A549 (cell line): ENCODE measurements at regions of chr1 and their contacts with region 1.

Region 1: DNA sequence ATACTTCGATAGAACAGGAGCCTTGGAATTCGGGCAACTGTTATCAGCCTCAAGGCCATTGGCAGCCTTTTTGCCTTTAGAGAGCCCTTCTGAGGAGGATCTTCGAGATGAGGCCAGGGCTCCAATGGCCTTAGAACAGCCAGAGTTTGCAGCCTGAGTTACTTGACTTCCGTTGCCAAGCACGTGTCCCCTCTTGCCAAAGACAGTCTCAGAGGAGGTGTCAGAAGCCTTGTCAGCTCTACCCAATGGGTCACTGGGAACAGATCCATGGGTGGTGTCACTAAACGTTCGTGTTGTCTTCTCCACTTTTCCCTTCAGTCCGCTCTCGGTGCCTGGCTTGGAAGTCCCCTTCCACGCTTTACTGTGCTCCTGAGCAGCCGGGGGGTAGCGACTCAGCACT is 73.2 kb downstream of the KDM1A start:
- DNase-seq: no peak
- ATAC-seq: no peak
- H3K4me3 ChIP-seq: no peak overlapping the region
- H3K27ac ChIP-seq: no peak overlapping the region
- H3K4me1 ChIP-seq: peaks cover 6% of the 10 kb centered on the region; the same call in 2 of the 3 replicates
- CTCF ChIP-seq: no peak
- EP300 ChIP-seq: no peak
- POLR2A ChIP-seq: no peak
- RAD21 ChIP-seq: no peak

Region 2: GRCh38 chr1:22976461-22977243 is 115.8 kb before region 1 on chr1:
- CTCF ChIA-PET with region 1: interaction called, 15 read pairs
- POLR2A ChIA-PET with region 1: interaction called, 4 read pairs
- DNase-seq: peak; percentile 78 to 85
- ATAC-seq: peak; percentile 96 to 97
- H3K4me3 ChIP-seq: no peak overlapping the region
- H3K27ac ChIP-seq: peak overlapping the region; percentile 63 to 85
- H3K4me1 ChIP-seq: peaks cover 34% of the 10 kb centered on the region
- CTCF ChIP-seq: peak; percentile 91
- EP300 ChIP-seq: no peak
- POLR2A ChIP-seq: no peak
- RAD21 ChIP-seq: peak; percentile 87 to 94